ENCODE measurements at regions of chr6 and their contacts with region 1.

Region 1: GRCh38 chr6:42928986-42929820 is at the start of gene CNPY3:
- DNase-seq: peak; percentile 98
- H3K4me3 Mint-ChIP-seq: peak within 1 kb of the TSS; percentile 100
- H3K27ac Mint-ChIP-seq: peak within 1 kb of the TSS; percentile 100
- H3K4me1 Mint-ChIP-seq: peaks cover 40% of the 10 kb centered on the region
- H3K27me3 Mint-ChIP-seq: no peaks in the 10 kb centered on the region
- total RNA-seq, gene CNPY3: 37.6 to 41.0 TPM

Region 2: GRCh38 chr6:42756722-42757121 is 172.5 kb before region 1 on chr6:
- CTCF ChIA-PET with region 1: no interaction called
- intact Hi-C with region 1: no loop called
- DNase-seq: no peak
- H3K4me3 Mint-ChIP-seq: no peak overlapping the region
- H3K27ac Mint-ChIP-seq: no peak overlapping the region
- H3K4me1 Mint-ChIP-seq: peaks cover 2% of the 10 kb centered on the region
- H3K27me3 Mint-ChIP-seq: no peaks in the 10 kb centered on the region

Region 3: GRCh38 chr6:42890311-42891198 is 38.6 kb before region 1 on chr6:
- CTCF ChIA-PET with region 1: interaction called, 3 read pairs
- intact Hi-C with region 1: loop called (anchors 1 kb)
- DNase-seq: peak; percentile 96
- H3K4me3 Mint-ChIP-seq: peak overlapping the region; percentile 82
- H3K27ac Mint-ChIP-seq: peak overlapping the region; percentile 95
- H3K4me1 Mint-ChIP-seq: peaks cover 32% of the 10 kb centered on the region
- H3K27me3 Mint-ChIP-seq: no peaks in the 10 kb centered on the region

Region 4: DNA sequence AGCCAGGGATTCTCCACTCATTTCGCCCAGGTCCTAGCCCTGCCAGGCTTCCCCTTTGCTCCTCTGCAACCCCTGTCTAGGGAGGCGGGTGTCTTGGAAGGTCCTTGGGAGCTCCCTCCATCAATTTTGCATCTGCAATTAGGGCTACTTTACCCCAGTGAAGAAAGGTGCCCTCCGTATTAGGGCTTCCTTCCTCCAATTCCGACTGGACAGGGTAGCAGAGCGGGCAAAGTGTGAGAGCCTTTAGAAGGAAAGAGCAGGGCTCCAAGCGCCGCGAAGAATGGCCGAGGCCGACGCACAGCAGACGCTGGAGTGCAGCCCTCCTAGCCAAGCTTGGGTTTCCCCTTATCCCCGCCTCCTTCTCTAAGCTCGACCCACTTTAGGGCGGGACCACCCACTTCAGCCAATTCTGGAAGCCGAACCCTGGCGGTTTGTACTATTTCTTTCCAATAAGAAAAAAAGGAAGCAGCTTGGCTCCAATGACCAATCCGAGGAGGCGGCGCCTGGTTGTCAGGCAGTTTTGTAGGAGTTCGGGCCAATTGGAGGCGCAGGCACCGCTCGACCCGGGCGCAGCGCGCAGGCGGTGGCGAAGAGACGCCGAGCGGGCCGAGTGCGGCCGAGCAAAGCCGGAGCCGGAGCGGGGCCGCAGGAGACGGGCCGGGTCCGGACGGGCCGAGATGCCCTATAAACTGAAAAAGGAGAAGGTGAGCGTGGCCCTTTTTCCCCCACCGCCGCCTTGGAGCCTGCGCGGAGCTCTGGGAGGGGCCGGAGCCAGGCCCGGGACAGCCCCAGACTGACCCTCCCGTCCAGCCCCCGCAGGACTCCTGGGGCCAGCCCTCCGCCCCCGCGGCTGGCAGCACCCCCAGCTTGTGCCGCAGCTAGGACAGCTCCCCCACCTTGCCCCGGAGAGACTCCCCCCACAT is 55.1 kb after region 1 on chr6 and contains the start of gene PPP2R5D:
- CTCF ChIA-PET with region 1: interaction called, 6 read pairs
- intact Hi-C with region 1: loop called (anchors 1 kb)
- DNase-seq: peak; percentile 99
- H3K4me3 Mint-ChIP-seq: peak within 1 kb of the TSS; percentile 93
- H3K27ac Mint-ChIP-seq: peak within 1 kb of the TSS; percentile 81
- H3K4me1 Mint-ChIP-seq: peaks cover 51% of the 10 kb centered on the region
- H3K27me3 Mint-ChIP-seq: no peaks in the 10 kb centered on the region
- total RNA-seq, gene PPP2R5D: 52.4 to 54.4 TPM

Region 5: GRCh38 chr6:43053545-43054205 is 124.5 kb after region 1 on chr6 and contains the start of gene CUL7:
- CTCF ChIA-PET with region 1: interaction called, 5 read pairs
- intact Hi-C with region 1: loop called (anchors 1 kb)
- DNase-seq: peak; percentile 96
- H3K4me3 Mint-ChIP-seq: peak within 1 kb of the TSS; percentile 99
- H3K27ac Mint-ChIP-seq: peak within 1 kb of the TSS; percentile 90
- H3K4me1 Mint-ChIP-seq: peaks cover 39% of the 10 kb centered on the region
- H3K27me3 Mint-ChIP-seq: no peaks in the 10 kb centered on the region
- total RNA-seq, gene CUL7: 21.9 to 22.1 TPM

Region 6: DNA sequence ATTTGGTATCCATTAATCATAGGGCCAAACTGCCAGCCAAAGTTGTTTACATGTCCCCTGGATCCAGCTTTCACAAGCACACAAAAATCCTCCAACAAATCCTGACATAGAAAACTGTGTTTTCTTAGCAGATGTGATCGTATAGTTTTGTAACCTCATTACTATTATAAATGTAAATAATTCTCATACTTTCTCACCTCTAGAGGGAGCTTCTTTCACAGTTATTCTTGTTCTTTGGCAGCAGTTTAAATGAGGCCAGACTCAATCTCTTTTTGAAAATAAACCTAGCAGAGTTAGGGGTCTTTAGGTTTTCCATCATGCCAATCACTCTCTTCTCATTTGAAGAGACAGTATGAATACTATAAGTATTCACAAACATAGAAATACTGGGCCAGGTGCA is 457.3 kb after region 1 on chr6:
- CTCF ChIA-PET with region 1: no interaction called
- intact Hi-C with region 1: loop called (anchors 1 kb)
- DNase-seq: no peak
- H3K4me3 Mint-ChIP-seq: no peak overlapping the region
- H3K27ac Mint-ChIP-seq: no peak overlapping the region
- H3K4me1 Mint-ChIP-seq: peaks cover 50% of the 10 kb centered on the region
- H3K27me3 Mint-ChIP-seq: peaks cover 3% of the 10 kb centered on the region

Region 7: GRCh38 chr6:43516697-43517504 is 587.7 kb after region 1 on chr6 and contains the starts of genes POLR1C and YIPF3:
- CTCF ChIA-PET with region 1: interaction called, 5 read pairs
- intact Hi-C with region 1: loop called (anchors 1 kb)
- DNase-seq: peak; percentile 99
- H3K4me3 Mint-ChIP-seq: no peak within 1 kb of the TSS
- H3K27ac Mint-ChIP-seq: no peak within 1 kb of the TSS
- H3K4me1 Mint-ChIP-seq: peaks cover 28% of the 10 kb centered on the region
- H3K27me3 Mint-ChIP-seq: no peaks in the 10 kb centered on the region
- total RNA-seq, gene POLR1C: 47.5 to 50.1 TPM
- total RNA-seq, gene YIPF3: 26.2 to 26.5 TPM